ENCODE measurements at regions of chr5 and their contacts with region 1.

Region 1: GRCh38 chr5:109688971-109689739 is 572 bp upstream of the MAN2A1 start:
- DNase-seq: peak; percentile 81
- H3K4me3 Mint-ChIP-seq: peak overlapping the region; percentile 89
- H3K27ac Mint-ChIP-seq: peak overlapping the region; percentile 92
- H3K4me1 Mint-ChIP-seq: peaks cover 31% of the 10 kb centered on the region
- H3K27me3 Mint-ChIP-seq: no peaks in the 10 kb centered on the region

Region 2: GRCh38 chr5:108260117-108260857 is 1428.9 kb before region 1 on chr5:
- CTCF ChIA-PET with region 1: interaction called, 3 read pairs
- intact Hi-C with region 1: loop called (anchors 10 kb)
- DNase-seq: peak; percentile 83
- H3K4me3 Mint-ChIP-seq: peak overlapping the region; percentile 48
- H3K27ac Mint-ChIP-seq: no peak overlapping the region
- H3K4me1 Mint-ChIP-seq: peaks cover 9% of the 10 kb centered on the region
- H3K27me3 Mint-ChIP-seq: no peaks in the 10 kb centered on the region

Region 3: DNA sequence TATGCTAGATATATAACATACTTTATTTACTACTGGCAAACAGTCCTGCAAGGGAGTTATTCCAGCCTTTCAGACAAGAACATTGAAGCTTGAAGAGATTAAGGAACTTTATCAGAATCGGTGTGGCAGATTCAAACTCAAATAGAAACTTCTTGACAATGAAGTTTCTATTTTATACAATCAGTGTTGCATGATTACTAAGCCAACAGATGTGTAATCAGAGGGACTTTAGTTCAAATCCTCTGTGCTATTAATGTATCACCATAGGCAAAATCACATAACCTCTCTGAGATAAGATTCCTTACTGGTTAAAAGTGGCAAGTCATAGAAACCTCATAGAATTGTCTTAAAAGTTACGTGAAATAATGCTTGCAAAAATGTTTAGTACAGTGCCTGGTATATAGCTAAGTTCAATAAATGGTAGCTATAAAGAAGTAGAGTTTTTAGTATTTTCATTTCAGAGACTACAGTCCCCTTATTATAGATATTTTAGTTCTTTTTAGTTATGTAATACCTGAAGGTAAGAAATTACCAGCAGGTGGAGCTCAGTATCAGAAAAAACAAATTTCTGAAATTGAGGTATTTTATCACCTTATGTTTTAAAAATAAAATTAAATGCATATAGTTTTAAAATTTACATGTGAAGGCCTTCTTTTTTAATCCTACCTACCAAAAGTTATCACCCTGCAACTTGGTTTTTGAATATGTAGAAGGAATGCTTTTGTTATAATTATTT is 769.4 kb before region 1 on chr5:
- CTCF ChIA-PET with region 1: interaction called, 3 read pairs
- intact Hi-C with region 1: loop called (anchors 2 kb)
- DNase-seq: no peak
- H3K4me3 Mint-ChIP-seq: no peak overlapping the region
- H3K27ac Mint-ChIP-seq: no peak overlapping the region
- H3K4me1 Mint-ChIP-seq: peaks cover 2% of the 10 kb centered on the region
- H3K27me3 Mint-ChIP-seq: no peaks in the 10 kb centered on the region

Region 4: DNA sequence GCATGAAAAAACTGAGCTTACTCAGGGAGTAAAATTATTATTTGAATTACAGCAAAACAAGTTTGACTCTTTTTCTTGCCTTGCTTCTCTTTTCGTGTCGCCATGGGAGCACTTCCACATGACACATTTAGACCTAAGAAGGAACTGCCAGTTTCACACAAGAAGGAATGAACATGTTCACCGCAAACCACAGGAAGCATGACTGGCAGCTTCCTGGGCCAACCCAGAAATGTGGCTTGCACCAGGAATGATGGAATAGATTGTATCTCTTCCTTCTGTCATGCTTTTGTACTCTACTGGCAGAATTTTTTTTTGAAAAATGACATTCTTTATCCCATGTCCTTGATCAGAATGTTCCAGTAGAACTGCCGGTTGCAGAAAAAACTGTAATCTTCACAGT is 32.3 kb before region 1 on chr5:
- CTCF ChIA-PET with region 1: interaction called, 4 read pairs
- intact Hi-C with region 1: loop called (anchors 2 kb)
- DNase-seq: peak; percentile 73
- H3K4me3 Mint-ChIP-seq: no peak overlapping the region
- H3K27ac Mint-ChIP-seq: no peak overlapping the region
- H3K4me1 Mint-ChIP-seq: peaks cover 32% of the 10 kb centered on the region
- H3K27me3 Mint-ChIP-seq: peaks cover 3% of the 10 kb centered on the region

Region 5: GRCh38 chr5:109961751-109962150 is 272.6 kb after region 1 on chr5:
- CTCF ChIA-PET with region 1: no interaction called
- intact Hi-C with region 1: loop called (anchors 2 kb)
- DNase-seq: no peak
- H3K4me3 Mint-ChIP-seq: no peak overlapping the region
- H3K27ac Mint-ChIP-seq: no peak overlapping the region
- H3K4me1 Mint-ChIP-seq: peaks cover 27% of the 10 kb centered on the region
- H3K27me3 Mint-ChIP-seq: no peaks in the 10 kb centered on the region

Region 6: DNA sequence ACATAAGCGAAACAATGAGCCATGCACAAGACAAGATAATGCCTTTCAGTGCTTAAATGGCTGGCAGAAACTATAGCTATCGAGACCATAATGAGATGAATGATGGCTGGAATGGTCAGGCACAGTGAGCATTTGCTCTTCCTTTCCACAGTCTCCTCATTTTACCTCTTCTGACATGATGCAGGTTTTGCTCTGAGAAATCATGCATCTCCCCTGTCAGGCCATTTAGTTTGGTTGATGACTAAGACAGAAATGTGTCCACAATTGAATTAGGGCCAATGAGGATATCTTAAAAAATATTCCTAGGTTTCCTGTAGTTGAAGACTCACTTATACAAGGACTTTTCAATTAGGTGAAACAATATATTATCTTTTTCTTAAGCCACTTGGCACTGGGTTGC is 562.2 kb after region 1 on chr5:
- CTCF ChIA-PET with region 1: no interaction called
- intact Hi-C with region 1: no loop called
- DNase-seq: no peak
- H3K4me3 Mint-ChIP-seq: no peak overlapping the region
- H3K27ac Mint-ChIP-seq: no peak overlapping the region
- H3K4me1 Mint-ChIP-seq: no peaks in the 10 kb centered on the region
- H3K27me3 Mint-ChIP-seq: no peaks in the 10 kb centered on the region

Region 7: GRCh38 chr5:110333384-110333783 is 644.2 kb after region 1 on chr5:
- CTCF ChIA-PET with region 1: no interaction called
- intact Hi-C with region 1: loop called (anchors 1 kb)
- DNase-seq: peak; percentile 58
- H3K4me3 Mint-ChIP-seq: no peak overlapping the region
- H3K27ac Mint-ChIP-seq: no peak overlapping the region
- H3K4me1 Mint-ChIP-seq: no peaks in the 10 kb centered on the region
- H3K27me3 Mint-ChIP-seq: no peaks in the 10 kb centered on the region

Region 8: GRCh38 chr5:110751902-110752762 is 1063.0 kb after region 1 on chr5:
- CTCF ChIA-PET with region 1: no interaction called
- intact Hi-C with region 1: loop called (anchors 5 kb)
- DNase-seq: peak; percentile 53
- H3K4me3 Mint-ChIP-seq: peak overlapping the region; percentile 19
- H3K27ac Mint-ChIP-seq: peak overlapping the region; percentile 91
- H3K4me1 Mint-ChIP-seq: peaks cover 45% of the 10 kb centered on the region
- H3K27me3 Mint-ChIP-seq: no peaks in the 10 kb centered on the region